K562 (cell line): ENCODE measurements at regions of chr3 and their contacts with region 1.

Region 1: GRCh38 chr3:149480325-149481017 is 6.0 kb downstream of the TM4SF4 start:
- DNase-seq: peak; percentile 65 to 72 (median 68)
- ATAC-seq: peak; percentile 99
- H3K4me3 ChIP-seq: no peak overlapping the region
- H3K27ac ChIP-seq: no peak overlapping the region
- H3K4me1 ChIP-seq: no peaks in the 10 kb centered on the region
- H3K27me3 ChIP-seq: peaks cover 0 to 4% of the 10 kb centered on the region in 2 experiments; a peak in 2 of 5 replicates
- CTCF ChIP-seq: peak; percentile 79 to 83 (median 82)
- EP300 ChIP-seq: no peak
- POLR2A ChIP-seq: no peak
- RAD21 ChIP-seq: peak; percentile 74 to 78

Region 2: DNA sequence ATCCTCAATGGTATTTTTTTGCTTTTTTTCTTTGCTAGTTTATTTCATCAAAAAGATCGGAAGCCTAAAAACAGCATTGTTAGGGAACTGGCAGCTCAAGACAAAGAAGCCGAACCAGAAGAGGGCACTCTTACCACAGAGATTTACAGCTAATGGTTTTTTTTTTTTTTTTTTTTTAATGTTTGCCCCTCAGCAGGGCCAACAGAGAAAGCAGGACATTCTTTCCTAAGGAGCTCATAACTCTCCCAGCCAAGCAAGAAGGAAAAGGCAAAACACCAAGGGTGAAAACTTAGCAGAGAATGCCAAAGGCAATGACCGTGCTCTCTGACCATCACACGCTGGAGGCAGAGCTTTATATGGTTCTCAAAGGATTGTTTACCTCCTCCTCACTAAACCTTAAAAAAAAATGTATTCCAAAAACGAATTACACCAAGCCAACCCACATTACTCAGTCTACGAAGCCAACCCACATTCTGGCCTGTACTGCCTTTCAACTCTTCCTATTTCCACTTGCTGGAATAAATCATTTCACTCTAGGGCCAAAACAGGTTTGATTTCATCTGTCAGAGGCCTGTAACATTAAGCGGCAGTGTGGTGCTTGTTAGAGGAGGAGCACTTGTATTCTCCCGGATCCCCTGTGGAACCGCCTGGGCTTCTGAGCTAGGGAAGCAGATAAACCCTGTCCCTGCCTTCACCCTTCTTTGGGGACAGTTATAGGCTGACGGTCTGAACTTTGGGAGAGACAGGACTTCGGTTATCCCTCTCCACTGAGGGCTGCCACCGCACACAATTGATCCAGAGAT is 524.7 kb before region 1 on chr3:
- CTCF ChIA-PET with region 1: no interaction called
- POLR2A ChIA-PET with region 1: no interaction called
- in situ Hi-C with region 1: loop called (anchors 25 kb)
- intact Hi-C with region 1: loop called (anchors 5 kb)
- DNase-seq: peak in 2 of 4 experiments; percentile 13 to 59
- ATAC-seq: peak; percentile 63
- H3K4me3 ChIP-seq: no peak overlapping the region
- H3K27ac ChIP-seq: no peak overlapping the region
- H3K4me1 ChIP-seq: no peaks in the 10 kb centered on the region
- H3K27me3 ChIP-seq: peaks cover 0 to 3% of the 10 kb centered on the region in 2 experiments; a peak in 1 of 5 replicates
- CTCF ChIP-seq: peak; percentile 61 to 75 (median 61); a peak in 5 of 6 replicates
- EP300 ChIP-seq: no peak
- POLR2A ChIP-seq: no peak
- RAD21 ChIP-seq: peak; percentile 67 to 73

Region 3: GRCh38 chr3:149114458-149114857 is 366.0 kb before region 1 on chr3:
- CTCF ChIA-PET with region 1: no interaction called
- POLR2A ChIA-PET with region 1: no interaction called
- in situ Hi-C with region 1: loop called (anchors 10 kb)
- intact Hi-C with region 1: no loop called
- DNase-seq: no peak
- ATAC-seq: no peak
- H3K4me3 ChIP-seq: no peak overlapping the region
- H3K27ac ChIP-seq: no peak overlapping the region
- H3K4me1 ChIP-seq: no peaks in the 10 kb centered on the region; a peak in 1 of 5 replicates
- H3K27me3 ChIP-seq: peaks cover 0 to 4% of the 10 kb centered on the region in 2 experiments; a peak in 1 of 5 replicates
- CTCF ChIP-seq: no peak
- EP300 ChIP-seq: no peak
- POLR2A ChIP-seq: no peak
- RAD21 ChIP-seq: no peak

Region 4: GRCh38 chr3:149352556-149352955 is 127.9 kb before region 1 on chr3:
- CTCF ChIA-PET with region 1: interaction called, 3 read pairs
- POLR2A ChIA-PET with region 1: no interaction called
- in situ Hi-C with region 1: no loop called
- intact Hi-C with region 1: loop called (anchors 1 kb)
- DNase-seq: peak; percentile 48 to 67 (median 60)
- ATAC-seq: peak; percentile 97
- H3K4me3 ChIP-seq: no peak overlapping the region
- H3K27ac ChIP-seq: no peak overlapping the region
- H3K4me1 ChIP-seq: no peaks in the 10 kb centered on the region
- H3K27me3 ChIP-seq: no peaks in the 10 kb centered on the region
- CTCF ChIP-seq: peak; percentile 63 to 69 (median 66)
- EP300 ChIP-seq: no peak
- POLR2A ChIP-seq: no peak
- RAD21 ChIP-seq: peak; percentile 51 to 59

Region 5: GRCh38 chr3:149393345-149394160 is 86.9 kb before region 1 on chr3:
- CTCF ChIA-PET with region 1: no interaction called
- POLR2A ChIA-PET with region 1: no interaction called
- in situ Hi-C with region 1: no loop called
- intact Hi-C with region 1: loop called (anchors 1 kb)
- DNase-seq: peak; percentile 35 to 61 (median 48)
- ATAC-seq: peak; percentile 97
- H3K4me3 ChIP-seq: no peak overlapping the region
- H3K27ac ChIP-seq: no peak overlapping the region
- H3K4me1 ChIP-seq: no peaks in the 10 kb centered on the region
- H3K27me3 ChIP-seq: peaks cover 0 to 5% of the 10 kb centered on the region in 2 experiments; a peak in 2 of 5 replicates
- CTCF ChIP-seq: peak; percentile 75 to 99 (median 93)
- EP300 ChIP-seq: no peak
- POLR2A ChIP-seq: no peak
- RAD21 ChIP-seq: peak; percentile 74

Region 6: DNA sequence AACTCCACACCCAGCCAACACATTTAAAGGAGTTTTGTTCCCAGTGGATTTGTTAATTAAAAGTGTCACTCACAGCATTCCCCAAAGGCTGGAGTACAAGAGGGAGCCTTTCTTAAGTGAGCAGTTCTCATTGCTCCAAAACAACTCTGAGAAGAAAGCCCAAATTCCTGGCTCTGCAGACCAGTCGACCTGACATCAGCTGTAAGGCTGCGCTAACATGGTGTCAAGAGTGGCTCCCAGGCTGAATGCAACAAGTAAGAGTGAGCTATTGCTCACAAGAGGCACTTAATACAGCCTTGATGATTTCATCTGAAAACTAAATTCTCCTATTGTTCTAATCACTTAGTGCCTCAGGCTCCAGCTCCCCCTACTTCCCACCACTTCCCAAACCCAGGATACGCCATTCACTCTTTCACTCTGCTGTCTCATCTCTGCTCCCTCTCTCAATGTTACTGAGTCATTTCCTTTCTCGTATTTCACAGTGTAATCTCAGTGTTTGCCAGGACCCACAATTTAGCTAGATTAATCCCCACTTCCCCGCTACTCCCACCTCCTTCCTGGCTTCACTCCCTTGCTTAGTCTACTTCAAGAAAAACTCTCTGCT is 95.6 kb after region 1 on chr3:
- CTCF ChIA-PET with region 1: no interaction called
- POLR2A ChIA-PET with region 1: no interaction called
- in situ Hi-C with region 1: no loop called
- intact Hi-C with region 1: no loop called
- DNase-seq: peak; percentile 16 to 65 (median 42)
- ATAC-seq: peak; percentile 91
- H3K4me3 ChIP-seq: no peak overlapping the region
- H3K27ac ChIP-seq: peak overlapping the region; percentile 67
- H3K4me1 ChIP-seq: peaks cover 0 to 14% of the 10 kb centered on the region in 2 experiments; a peak in 3 of 5 replicates
- H3K27me3 ChIP-seq: no peaks in the 10 kb centered on the region
- CTCF ChIP-seq: no peak
- EP300 ChIP-seq: peak; percentile 83
- POLR2A ChIP-seq: no peak
- RAD21 ChIP-seq: no peak